MCF 10A (cell line): ENCODE measurements at regions of chr3 and their contacts with region 1.

Region 1: GRCh38 chr3:15332405-15333098 is at the start of gene SH3BP5:
- DNase-seq: peak; percentile 63
- H3K4me3 Mint-ChIP-seq: peak within 1 kb of the TSS; percentile 89
- H3K27ac Mint-ChIP-seq: peak within 1 kb of the TSS; percentile 75
- H3K4me1 Mint-ChIP-seq: no peaks in the 10 kb centered on the region
- H3K27me3 Mint-ChIP-seq: no peaks in the 10 kb centered on the region
- CTCF ChIP-seq: peak; percentile 53
- total RNA-seq, gene SH3BP5: 8.4 and 8.8 TPM in 2 replicates

Region 2: GRCh38 chr3:15081960-15082664 is 250.4 kb before region 1 on chr3:
- CTCF ChIA-PET with region 1: no interaction called
- POLR2A ChIA-PET with region 1: no interaction called
- intact Hi-C with region 1: no loop called
- DNase-seq: peak; percentile 58
- H3K4me3 Mint-ChIP-seq: no peak overlapping the region
- H3K27ac Mint-ChIP-seq: peak overlapping the region; percentile 64
- H3K4me1 Mint-ChIP-seq: peaks cover 12% of the 10 kb centered on the region
- H3K27me3 Mint-ChIP-seq: no peaks in the 10 kb centered on the region
- CTCF ChIP-seq: no peak

Region 3: GRCh38 chr3:15309662-15310335 is 22.8 kb before region 1 on chr3:
- CTCF ChIA-PET with region 1: interaction called, 5 read pairs
- POLR2A ChIA-PET with region 1: interaction called, 12 read pairs
- intact Hi-C with region 1: no loop called
- DNase-seq: no peak
- H3K4me3 Mint-ChIP-seq: no peak overlapping the region
- H3K27ac Mint-ChIP-seq: no peak overlapping the region
- H3K4me1 Mint-ChIP-seq: peaks cover 15% of the 10 kb centered on the region
- H3K27me3 Mint-ChIP-seq: no peaks in the 10 kb centered on the region
- CTCF ChIP-seq: no peak

Region 4: DNA sequence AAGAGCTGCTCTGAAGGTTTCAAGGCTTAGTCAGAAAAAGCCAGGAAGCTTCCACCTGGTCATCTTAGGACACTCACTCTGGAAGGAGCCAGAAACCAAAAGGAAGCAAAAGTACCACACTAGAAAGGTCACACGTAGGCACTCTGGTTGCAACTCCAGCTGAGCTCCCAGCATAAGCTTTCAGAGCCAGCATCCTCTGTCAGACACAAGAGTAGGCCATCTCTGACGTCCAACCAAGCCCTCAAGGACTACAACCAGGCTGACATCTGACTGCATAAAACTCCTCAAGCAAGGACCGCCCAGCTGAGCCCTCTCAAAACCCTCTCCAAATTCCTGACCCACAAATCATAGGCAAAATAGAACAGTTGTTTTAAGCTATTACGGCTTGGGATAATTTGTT is 13.0 kb before region 1 on chr3:
- CTCF ChIA-PET with region 1: interaction called, 10 read pairs
- POLR2A ChIA-PET with region 1: interaction called, 17 read pairs
- intact Hi-C with region 1: no loop called
- DNase-seq: no peak
- H3K4me3 Mint-ChIP-seq: no peak overlapping the region
- H3K27ac Mint-ChIP-seq: no peak overlapping the region
- H3K4me1 Mint-ChIP-seq: peaks cover 18% of the 10 kb centered on the region
- H3K27me3 Mint-ChIP-seq: no peaks in the 10 kb centered on the region
- CTCF ChIP-seq: no peak

Region 5: DNA sequence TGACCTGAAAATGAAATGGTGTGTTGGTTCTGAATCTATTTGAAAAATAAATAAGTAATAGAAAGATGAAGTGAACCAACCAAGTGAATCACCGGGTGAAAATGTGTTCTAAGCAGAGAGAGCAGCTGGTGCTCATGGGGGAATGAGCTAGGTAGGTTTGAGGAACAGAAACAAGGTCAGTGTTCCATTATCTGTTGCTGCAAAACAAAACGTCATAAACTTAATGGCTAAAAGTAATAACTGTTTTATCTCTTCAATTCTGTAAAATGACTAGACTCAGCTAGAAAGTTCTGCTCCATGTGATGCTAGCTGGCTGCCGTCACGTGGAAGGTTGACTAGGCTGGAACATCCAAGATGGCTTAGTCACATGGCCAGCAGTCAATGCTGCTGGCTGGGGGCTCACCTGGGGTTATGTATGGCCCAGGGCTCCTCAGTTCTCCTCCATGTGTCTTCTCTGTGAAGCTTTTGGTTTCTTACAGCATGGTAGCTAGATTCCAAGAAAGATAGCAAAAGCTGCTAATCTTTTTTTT is 13.1 kb after region 1 on chr3:
- CTCF ChIA-PET with region 1: interaction called, 10 read pairs
- POLR2A ChIA-PET with region 1: interaction called, 3 read pairs
- intact Hi-C with region 1: no loop called
- DNase-seq: no peak
- H3K4me3 Mint-ChIP-seq: no peak overlapping the region
- H3K27ac Mint-ChIP-seq: no peak overlapping the region
- H3K4me1 Mint-ChIP-seq: peaks cover 7% of the 10 kb centered on the region
- H3K27me3 Mint-ChIP-seq: peaks cover 30% of the 10 kb centered on the region
- CTCF ChIP-seq: no peak

Region 6: DNA sequence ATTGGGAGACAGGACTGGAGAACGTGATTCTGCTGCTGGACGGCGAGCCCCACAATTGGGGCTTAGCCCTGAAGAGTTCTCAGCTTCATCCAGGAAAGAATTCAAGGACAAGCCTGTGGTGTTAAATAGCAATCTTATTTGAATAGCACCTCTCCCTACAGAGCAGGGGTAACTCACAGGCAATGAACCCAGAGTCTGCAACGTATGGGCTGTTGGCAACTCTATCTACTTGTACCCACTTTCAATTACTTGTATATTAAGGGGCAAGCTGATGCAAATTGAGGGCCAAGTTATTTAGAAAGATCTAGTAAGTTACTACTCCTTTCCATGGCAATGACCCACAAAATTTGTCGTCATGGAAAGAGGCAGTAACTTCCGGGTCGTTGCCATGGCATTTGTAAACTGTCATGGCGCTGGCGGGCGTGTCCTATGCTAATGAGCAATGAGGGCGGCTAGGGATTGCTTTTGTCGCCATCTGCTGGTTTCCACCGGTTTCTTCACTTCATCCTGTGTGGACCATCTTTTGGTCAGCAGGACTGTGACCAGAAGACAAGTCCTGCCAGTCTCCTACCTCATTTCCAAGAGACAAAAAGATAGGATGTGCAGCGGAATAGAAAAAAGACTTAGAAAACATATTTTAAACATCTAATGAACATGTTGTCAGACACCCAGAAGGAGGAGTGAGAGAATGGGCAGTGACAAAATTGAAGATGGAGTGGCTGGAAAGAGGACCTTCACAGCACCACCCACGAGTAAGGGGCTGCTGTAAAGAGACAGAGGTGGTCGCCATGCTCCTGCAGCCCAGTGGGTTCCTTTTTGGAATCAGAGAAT is 45.6 kb after region 1 on chr3:
- CTCF ChIA-PET with region 1: interaction called, 6 read pairs
- POLR2A ChIA-PET with region 1: interaction called, 3 read pairs
- intact Hi-C with region 1: loop called (anchors 1 kb)
- DNase-seq: peak; percentile 96
- H3K4me3 Mint-ChIP-seq: no peak overlapping the region
- H3K27ac Mint-ChIP-seq: no peak overlapping the region
- H3K4me1 Mint-ChIP-seq: no peaks in the 10 kb centered on the region
- H3K27me3 Mint-ChIP-seq: no peaks in the 10 kb centered on the region
- CTCF ChIP-seq: peak; percentile 86